ENCODE measurements at regions of chr18 and their contacts with region 1.

Region 1: GRCh38 chr18:23515911-23516546 is 12.7 kb downstream of the RMC1 start:
- DNase-seq: peak; percentile 69
- ATAC-seq: peak; percentile 97

Region 2: GRCh38 chr18:23365602-23366001 is 150.4 kb before region 1 on chr18:
- intact Hi-C with region 1: no loop called
- DNase-seq: no peak
- ATAC-seq: peak; percentile 91

Region 3: GRCh38 chr18:23593720-23594119 is 77.7 kb after region 1 on chr18:
- intact Hi-C with region 1: loop called (anchors 5 kb)
- DNase-seq: no peak
- ATAC-seq: no peak